B cell (primary cell): ENCODE measurements at regions of chr10 and their contacts with region 1.

Region 1: DNA sequence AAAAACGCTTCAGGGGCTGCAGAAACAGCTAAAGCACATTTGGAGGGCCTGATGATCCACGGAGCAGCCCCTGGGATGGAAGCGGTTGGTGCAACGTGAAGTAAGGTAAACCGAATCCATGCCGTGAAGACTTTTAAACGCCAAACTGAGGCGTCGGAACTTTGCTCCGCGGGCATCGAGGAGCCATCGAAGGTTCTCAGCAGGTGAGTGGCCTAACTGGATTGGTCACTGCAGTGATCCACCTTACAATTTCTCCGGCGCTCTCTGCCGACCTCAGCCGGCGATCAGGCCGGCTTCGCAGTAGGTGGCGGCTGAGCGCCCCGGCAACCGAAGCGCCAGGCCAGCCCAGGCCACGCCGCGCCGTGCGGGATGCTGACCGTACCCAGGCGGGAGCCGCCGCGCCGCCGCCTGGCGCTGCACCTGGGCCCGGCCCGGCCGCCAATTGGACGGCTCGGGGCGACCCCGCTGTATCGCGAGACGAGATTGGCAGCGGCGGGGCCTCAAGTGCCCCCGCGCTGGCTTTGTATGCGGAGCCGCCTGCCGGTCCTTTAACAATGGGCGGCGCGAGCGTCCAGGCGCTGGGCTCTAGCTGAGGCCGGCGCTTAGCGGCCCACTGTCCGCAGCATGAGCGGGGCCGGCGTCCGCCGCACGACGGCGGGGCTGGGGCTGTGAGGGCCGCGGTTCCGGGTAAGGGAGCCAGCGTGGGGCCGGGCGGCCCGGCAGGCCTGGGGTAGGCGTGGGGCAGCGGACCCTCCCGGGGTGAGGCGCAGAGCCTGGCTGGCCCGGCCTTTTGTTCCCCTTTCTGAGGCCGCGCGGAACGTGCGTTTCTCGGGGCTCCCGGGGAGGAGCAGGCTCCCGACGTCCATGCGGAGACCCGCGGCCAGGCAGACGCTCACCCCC is at the start of gene CCNJ:
- DNase-seq: peak; percentile 91
- ATAC-seq: peak; percentile 85
- H3K4me3 ChIP-seq: peak within 1 kb of the TSS; percentile 56 to 83 (median 73)
- H3K4me3 Mint-ChIP-seq: peak within 1 kb of the TSS; percentile 96
- H3K27ac ChIP-seq: peak within 1 kb of the TSS; percentile 54 to 84
- H3K27ac Mint-ChIP-seq: peak within 1 kb of the TSS; percentile 88
- H3K4me1 ChIP-seq: peaks cover 11 to 14% of the 10 kb centered on the region in 2 donors
- H3K4me1 Mint-ChIP-seq: peaks cover 37% of the 10 kb centered on the region
- H3K27me3 ChIP-seq: peaks cover 0 to 5% (median 0%) of the 10 kb centered on the region in 4 experiments
- H3K27me3 Mint-ChIP-seq: no peaks in the 10 kb centered on the region
- CTCF ChIP-seq: peak; percentile 3
- total RNA-seq, gene CCNJ: 8.9 and 9.1 TPM in 2 replicates

Region 2: GRCh38 chr10:95976362-95977229 is 66.7 kb before region 1 on chr10:
- CTCF ChIA-PET with region 1: no interaction called
- POLR2A ChIA-PET with region 1: no interaction called
- intact Hi-C with region 1: no loop called
- DNase-seq: no peak
- ATAC-seq: no peak
- H3K4me3 ChIP-seq: no peak overlapping the region
- H3K4me3 Mint-ChIP-seq: no peak overlapping the region
- H3K27ac ChIP-seq: no peak overlapping the region
- H3K27ac Mint-ChIP-seq: no peak overlapping the region
- H3K4me1 ChIP-seq: no peaks in the 10 kb centered on the region
- H3K4me1 Mint-ChIP-seq: peaks cover 4% of the 10 kb centered on the region
- H3K27me3 ChIP-seq: no peaks in the 10 kb centered on the region
- H3K27me3 Mint-ChIP-seq: no peaks in the 10 kb centered on the region
- CTCF ChIP-seq: no peak

Region 3: DNA sequence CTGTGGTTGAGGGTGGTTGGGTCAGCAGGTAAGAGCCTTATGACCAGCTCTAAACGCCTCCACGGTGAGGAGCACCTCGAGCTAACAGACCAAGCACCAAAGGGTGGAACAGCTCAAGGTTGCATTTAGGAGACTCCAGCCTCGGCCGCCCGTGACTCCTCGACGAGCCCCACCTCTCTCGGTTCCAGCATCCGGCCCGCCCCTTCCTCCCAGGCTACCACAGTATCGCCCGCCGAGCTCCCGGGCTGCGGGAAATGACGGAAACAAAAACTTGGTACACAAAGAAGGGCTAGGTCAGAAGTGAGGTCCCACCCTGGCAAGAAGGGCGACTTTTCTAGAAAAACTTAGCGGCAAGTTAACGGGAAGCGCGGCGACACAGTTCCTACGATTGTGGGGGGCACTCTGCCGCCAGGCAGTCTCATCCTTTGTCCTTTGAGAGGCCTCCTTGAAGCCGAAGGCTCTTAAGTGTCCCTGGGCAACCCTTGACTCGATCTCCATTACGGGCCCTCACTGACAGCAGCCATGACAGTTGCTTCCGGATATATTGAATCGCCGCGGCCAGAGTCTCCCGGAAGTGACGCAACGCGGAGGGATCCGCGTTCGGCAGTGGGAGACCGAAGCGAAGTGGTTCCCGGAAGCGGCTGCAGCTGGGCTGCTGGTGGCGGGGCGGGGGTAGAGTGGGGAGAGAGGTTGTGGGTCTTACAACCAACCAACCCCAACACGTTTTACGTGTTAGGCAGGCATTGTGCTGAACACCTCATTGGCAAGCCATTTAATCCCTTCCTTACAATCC is 46.6 kb after region 1 on chr10:
- CTCF ChIA-PET with region 1: interaction called, 4 read pairs
- POLR2A ChIA-PET with region 1: interaction called, 3 read pairs
- intact Hi-C with region 1: loop called (anchors 1 kb)
- DNase-seq: peak; percentile 98
- ATAC-seq: peak; percentile 88
- H3K4me3 ChIP-seq: peak overlapping the region; percentile 67 to 97 (median 96)
- H3K4me3 Mint-ChIP-seq: peak overlapping the region; percentile 98
- H3K27ac ChIP-seq: peak overlapping the region; percentile 89 to 96
- H3K27ac Mint-ChIP-seq: peak overlapping the region; percentile 99
- H3K4me1 ChIP-seq: peaks cover 6 to 9% of the 10 kb centered on the region in 2 donors
- H3K4me1 Mint-ChIP-seq: peaks cover 10% of the 10 kb centered on the region
- H3K27me3 ChIP-seq: peaks cover 0 to 31% (median 20%) of the 10 kb centered on the region in 4 experiments
- H3K27me3 Mint-ChIP-seq: peaks cover 33% of the 10 kb centered on the region
- CTCF ChIP-seq: no peak

Region 4: DNA sequence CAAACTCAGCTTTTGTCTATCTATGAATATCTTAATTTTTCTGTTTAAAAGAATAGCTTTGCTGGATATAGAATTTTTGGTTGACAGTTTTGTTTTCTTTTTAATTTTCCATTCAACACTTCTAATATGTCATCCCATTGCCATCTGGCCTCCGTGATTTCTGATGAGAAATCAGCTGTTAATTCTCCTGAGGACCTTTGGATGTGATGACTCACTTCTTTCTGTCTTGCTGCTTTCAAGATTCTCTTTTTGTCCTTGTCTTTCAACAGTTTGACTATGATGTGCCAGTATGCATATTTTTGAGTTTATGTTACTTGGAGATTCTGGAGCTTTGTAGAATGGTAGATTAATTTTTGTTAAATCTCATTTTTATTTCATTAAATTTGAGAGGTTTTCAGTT is 125.3 kb after region 1 on chr10:
- CTCF ChIA-PET with region 1: no interaction called
- POLR2A ChIA-PET with region 1: no interaction called
- intact Hi-C with region 1: no loop called
- DNase-seq: no peak
- ATAC-seq: no peak
- H3K4me3 ChIP-seq: no peak overlapping the region
- H3K4me3 Mint-ChIP-seq: no peak overlapping the region
- H3K27ac ChIP-seq: no peak overlapping the region
- H3K27ac Mint-ChIP-seq: no peak overlapping the region
- H3K4me1 ChIP-seq: no peaks in the 10 kb centered on the region
- H3K4me1 Mint-ChIP-seq: no peaks in the 10 kb centered on the region
- H3K27me3 ChIP-seq: no peaks in the 10 kb centered on the region
- H3K27me3 Mint-ChIP-seq: no peaks in the 10 kb centered on the region
- CTCF ChIP-seq: no peak